ENCODE measurements at regions of chr1 and their contacts with region 1.

Region 1: GRCh38 chr1:64686828-64687724 is 57.8 kb upstream of the RAVER2 start:
- DNase-seq: no peak
- ATAC-seq: peak; percentile 62 to 85
- H3K4me3 ChIP-seq: no peak overlapping the region
- H3K27ac ChIP-seq: no peak overlapping the region
- H3K4me1 ChIP-seq: no peaks in the 10 kb centered on the region
- H3K27me3 ChIP-seq: no peaks in the 10 kb centered on the region

Region 2: GRCh38 chr1:65674522-65674921 is 987.4 kb after region 1 on chr1:
- intact Hi-C with region 1: loop called in 1 of 4 experiments (anchors 10 kb)
- DNase-seq: no peak
- ATAC-seq: no peak
- H3K4me3 ChIP-seq: no peak overlapping the region
- H3K27ac ChIP-seq: no peak overlapping the region
- H3K4me1 ChIP-seq: no peaks in the 10 kb centered on the region
- H3K27me3 ChIP-seq: no peaks in the 10 kb centered on the region